ENCODE measurements at regions of chr1 and their contacts with region 1.

Region 1: GRCh38 chr1:160251687-160252526 is 10.4 kb downstream of the DCAF8 start:
- DNase-seq: no peak
- ATAC-seq: peak; percentile 98
- H3K4me3 ChIP-seq: no peak overlapping the region
- H3K27ac ChIP-seq: no peak overlapping the region
- H3K4me1 ChIP-seq: peaks cover 13% of the 10 kb centered on the region
- H3K27me3 ChIP-seq: no peaks in the 10 kb centered on the region
- CTCF ChIP-seq: peak; percentile 74

Region 2: DNA sequence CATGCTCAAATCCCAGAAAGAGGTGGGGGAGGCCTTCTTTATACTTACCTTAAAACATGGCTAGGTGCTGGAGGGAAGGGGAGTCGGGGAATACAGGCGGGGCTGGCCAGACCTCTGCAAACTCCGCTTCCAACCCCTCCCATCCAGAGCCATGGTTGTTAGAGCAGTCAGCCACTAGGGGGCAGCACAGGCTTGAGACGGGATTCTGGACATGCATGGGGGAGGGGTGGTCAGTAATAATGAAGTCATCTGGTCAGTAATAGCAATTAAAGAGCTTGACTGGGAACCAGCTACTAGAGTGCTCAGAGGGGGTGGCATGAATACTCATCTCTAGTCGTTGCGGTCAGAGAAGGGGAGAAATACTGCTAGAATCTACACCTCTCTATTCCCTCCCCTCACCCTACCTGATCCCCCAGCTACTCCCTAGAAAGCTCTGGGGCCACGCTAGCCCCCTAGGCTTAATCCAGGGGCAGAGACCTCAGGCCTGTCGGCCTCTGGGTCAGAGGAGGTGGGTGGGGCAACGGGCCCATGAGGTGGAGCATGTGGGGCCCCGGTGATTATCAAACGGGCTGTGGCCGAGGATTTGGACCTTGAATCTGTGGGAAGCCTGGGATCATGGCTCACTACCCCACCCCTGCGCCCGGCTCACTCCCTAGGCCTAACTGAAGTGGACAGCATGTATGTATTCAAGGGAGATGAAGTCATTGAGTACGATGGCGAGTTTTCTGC is 58.7 kb before region 1 on chr1:
- intact Hi-C with region 1: loop called (anchors 10 kb)
- DNase-seq: peak; percentile 86
- ATAC-seq: peak; percentile 96
- H3K4me3 ChIP-seq: no peak overlapping the region
- H3K27ac ChIP-seq: no peak overlapping the region
- H3K4me1 ChIP-seq: peaks cover 4% of the 10 kb centered on the region
- H3K27me3 ChIP-seq: no peaks in the 10 kb centered on the region
- CTCF ChIP-seq: peak; percentile 94

Region 3: GRCh38 chr1:160309180-160309530 is 57.2 kb after region 1 on chr1:
- intact Hi-C with region 1: no loop called
- DNase-seq: no peak
- ATAC-seq: no peak
- H3K4me3 ChIP-seq: no peak overlapping the region
- H3K27ac ChIP-seq: no peak overlapping the region
- H3K4me1 ChIP-seq: no peaks in the 10 kb centered on the region
- H3K27me3 ChIP-seq: no peaks in the 10 kb centered on the region
- CTCF ChIP-seq: no peak

Measured in upper lobe of right lung (tissue), 1 donor.